ENCODE measurements at regions of chr1 and their contacts with region 1.

Region 1: DNA sequence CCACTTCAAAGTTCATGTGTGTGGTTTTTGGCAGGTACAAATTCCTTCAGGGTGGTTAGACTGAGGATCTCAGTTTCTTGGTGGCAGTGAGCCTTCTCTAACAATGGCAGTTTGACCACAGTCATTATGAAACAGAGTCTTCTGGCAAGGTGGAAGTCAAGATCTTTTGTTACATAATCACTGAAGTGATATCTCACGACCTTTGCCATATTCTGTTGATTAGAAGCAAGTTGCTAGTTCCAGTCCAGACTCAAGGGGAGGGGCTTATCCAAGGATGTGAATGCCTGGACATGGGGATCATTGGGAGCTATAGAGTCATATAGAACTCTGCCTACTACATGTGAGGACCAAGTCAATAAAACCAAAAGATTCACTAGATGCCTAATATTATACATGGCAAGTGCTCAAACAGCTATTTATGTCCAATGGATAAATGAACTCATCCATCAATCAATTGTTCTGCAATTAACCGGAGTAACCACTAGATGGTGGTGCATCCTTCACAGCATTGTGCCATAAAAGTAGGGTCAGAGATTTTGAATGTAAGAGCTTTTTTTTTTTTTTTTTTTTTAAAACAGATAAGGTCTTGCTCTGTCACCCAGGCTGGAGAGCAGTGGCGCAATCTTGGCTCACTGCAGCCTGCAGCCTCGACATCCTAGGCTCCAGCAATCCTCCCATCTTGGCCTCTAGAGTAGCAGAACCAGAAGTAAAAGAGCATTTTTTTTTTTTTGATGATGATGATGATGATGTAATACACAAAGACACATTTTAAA is 131.9 kb downstream of the CRB1 start:
- DNase-seq: peak; percentile 74
- ATAC-seq: peak; percentile 84
- H3K4me3 ChIP-seq: no peak overlapping the region
- H3K27ac ChIP-seq: no peak overlapping the region
- H3K4me1 ChIP-seq: no peaks in the 10 kb centered on the region
- H3K27me3 ChIP-seq: no peaks in the 10 kb centered on the region
- CTCF ChIP-seq: peak; percentile 32 to 76 (median 68); a peak in 5 of 6 replicates
- POLR2A ChIP-seq: no peak
- RAD21 ChIP-seq: peak; percentile 61

Region 2: GRCh38 chr1:197218857-197219256 is 181.1 kb before region 1 on chr1:
- CTCF ChIA-PET with region 1: no interaction called
- POLR2A ChIA-PET with region 1: no interaction called
- RAD21 ChIA-PET with region 1: no interaction called
- intact Hi-C with region 1: no loop called
- DNase-seq: no peak
- ATAC-seq: no peak
- H3K4me3 ChIP-seq: no peak overlapping the region
- H3K27ac ChIP-seq: no peak overlapping the region
- H3K4me1 ChIP-seq: no peaks in the 10 kb centered on the region
- H3K27me3 ChIP-seq: no peaks in the 10 kb centered on the region
- CTCF ChIP-seq: no peak
- POLR2A ChIP-seq: no peak
- RAD21 ChIP-seq: no peak

Region 3: DNA sequence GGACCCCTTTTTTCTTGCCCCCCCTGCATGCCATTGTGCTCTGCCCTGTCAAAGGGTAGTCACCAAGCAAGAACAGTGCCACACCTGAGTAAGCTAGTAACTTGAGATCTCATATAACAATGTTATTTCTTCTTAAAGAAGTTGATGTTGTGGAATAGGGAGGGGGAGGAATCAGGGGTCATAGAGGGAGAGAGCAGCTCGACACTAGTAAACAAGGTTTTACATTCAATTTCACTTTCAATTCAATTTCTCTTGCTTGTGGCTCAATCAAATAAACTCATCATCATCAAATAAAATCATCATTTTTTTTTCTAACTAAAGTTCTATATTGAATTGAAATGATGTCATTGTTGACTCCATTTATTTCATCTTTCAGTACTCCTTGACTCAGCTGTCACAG is 25.5 kb before region 1 on chr1:
- CTCF ChIA-PET with region 1: no interaction called
- POLR2A ChIA-PET with region 1: no interaction called
- RAD21 ChIA-PET with region 1: no interaction called
- intact Hi-C with region 1: no loop called
- DNase-seq: no peak
- ATAC-seq: no peak
- H3K4me3 ChIP-seq: no peak overlapping the region
- H3K27ac ChIP-seq: no peak overlapping the region
- H3K4me1 ChIP-seq: no peaks in the 10 kb centered on the region
- H3K27me3 ChIP-seq: no peaks in the 10 kb centered on the region
- CTCF ChIP-seq: no peak
- POLR2A ChIP-seq: no peak
- RAD21 ChIP-seq: no peak

Region 4: GRCh38 chr1:197384471-197384870 is 15.5 kb before region 1 on chr1:
- CTCF ChIA-PET with region 1: interaction called, 22 read pairs
- POLR2A ChIA-PET with region 1: no interaction called
- RAD21 ChIA-PET with region 1: no interaction called
- intact Hi-C with region 1: no loop called
- DNase-seq: no peak
- ATAC-seq: no peak
- H3K4me3 ChIP-seq: no peak overlapping the region
- H3K27ac ChIP-seq: no peak overlapping the region
- H3K4me1 ChIP-seq: no peaks in the 10 kb centered on the region
- H3K27me3 ChIP-seq: no peaks in the 10 kb centered on the region
- CTCF ChIP-seq: no peak
- POLR2A ChIP-seq: no peak
- RAD21 ChIP-seq: no peak

Measured in HCT116 (cell line).